Activated naive CD4-positive, alpha-beta T cell treated with anti-CD3 and anti-CD28 coated beads for 36 hours (primary cell): ENCODE measurements at regions of chr16 and their contacts with region 1.

Region 1: GRCh38 chr16:47574091-47575054 is 113.2 kb downstream of the PHKB start:
- DNase-seq: peak; percentile 70
- H3K4me3 Mint-ChIP-seq: no peak overlapping the region
- H3K27ac Mint-ChIP-seq: peak overlapping the region; percentile 86
- H3K4me1 Mint-ChIP-seq: peaks cover 56% of the 10 kb centered on the region
- H3K27me3 Mint-ChIP-seq: no peaks in the 10 kb centered on the region

Region 2: DNA sequence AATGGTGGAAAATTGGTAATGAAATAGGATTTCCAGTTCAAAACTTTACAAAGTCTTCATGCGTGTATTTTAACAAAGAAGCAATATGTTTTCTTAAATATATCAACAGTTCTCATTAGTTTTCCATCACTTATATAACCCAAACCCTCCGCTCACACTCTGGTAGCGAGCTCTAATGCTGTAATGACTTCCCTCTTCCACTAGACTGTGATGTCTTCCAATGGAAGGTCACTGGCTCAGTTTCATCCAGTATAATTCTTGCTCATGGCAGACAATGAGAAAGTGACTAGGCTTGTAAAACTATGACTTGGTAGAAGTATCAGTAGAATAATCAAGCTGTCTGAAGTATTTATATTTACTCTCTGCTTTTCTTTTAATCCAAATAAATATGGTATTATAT is 463.4 kb before region 1 on chr16:
- CTCF ChIA-PET with region 1: no interaction called
- intact Hi-C with region 1: loop called (anchors 1 kb)
- DNase-seq: no peak
- H3K4me3 Mint-ChIP-seq: no peak overlapping the region
- H3K27ac Mint-ChIP-seq: no peak overlapping the region
- H3K4me1 Mint-ChIP-seq: peaks cover 19% of the 10 kb centered on the region
- H3K27me3 Mint-ChIP-seq: no peaks in the 10 kb centered on the region

Region 3: GRCh38 chr16:47523342-47524006 is 50.9 kb before region 1 on chr16:
- CTCF ChIA-PET with region 1: no interaction called
- intact Hi-C with region 1: loop called (anchors 5 kb)
- DNase-seq: no peak
- H3K4me3 Mint-ChIP-seq: no peak overlapping the region
- H3K27ac Mint-ChIP-seq: no peak overlapping the region
- H3K4me1 Mint-ChIP-seq: peaks cover 11% of the 10 kb centered on the region
- H3K27me3 Mint-ChIP-seq: no peaks in the 10 kb centered on the region

Region 4: DNA sequence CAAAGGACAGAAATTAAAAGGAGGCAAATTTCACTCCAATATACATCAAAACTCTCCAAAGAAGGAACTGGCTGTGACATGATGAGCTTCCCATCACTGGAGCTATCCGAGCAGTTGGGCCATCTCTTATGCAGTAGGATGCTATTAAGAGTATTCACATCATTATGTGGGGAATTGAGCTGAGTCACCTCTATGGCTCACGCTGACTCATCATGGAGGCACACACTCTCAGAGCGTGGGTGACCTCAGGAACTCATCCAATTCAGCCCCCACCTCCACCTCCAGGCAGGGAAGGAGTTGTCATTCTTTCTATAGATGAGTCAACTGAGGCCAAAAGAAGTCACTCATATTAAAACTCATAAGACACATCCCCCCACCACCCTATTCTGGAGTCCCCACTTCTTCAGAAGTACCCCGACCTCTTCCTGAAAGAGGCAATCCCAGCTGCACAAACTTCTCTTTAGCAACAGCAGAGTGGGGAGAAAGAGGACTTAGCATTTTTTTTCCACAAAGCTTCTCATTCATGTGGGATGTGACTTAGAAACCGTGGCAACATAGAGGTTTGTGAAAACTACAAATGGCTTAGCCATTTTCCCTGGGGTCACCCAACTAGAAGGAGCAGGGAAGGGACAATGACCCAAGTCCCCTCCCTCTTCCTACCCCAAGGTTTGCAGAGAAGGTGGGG is 548.9 kb after region 1 on chr16:
- CTCF ChIA-PET with region 1: no interaction called
- intact Hi-C with region 1: loop called (anchors 10 kb)
- DNase-seq: peak; percentile 74
- H3K4me3 Mint-ChIP-seq: no peak overlapping the region
- H3K27ac Mint-ChIP-seq: no peak overlapping the region
- H3K4me1 Mint-ChIP-seq: peaks cover 15% of the 10 kb centered on the region
- H3K27me3 Mint-ChIP-seq: peaks cover 13% of the 10 kb centered on the region